ENCODE measurements at regions of chr6 and their contacts with region 1.

Region 1: DNA sequence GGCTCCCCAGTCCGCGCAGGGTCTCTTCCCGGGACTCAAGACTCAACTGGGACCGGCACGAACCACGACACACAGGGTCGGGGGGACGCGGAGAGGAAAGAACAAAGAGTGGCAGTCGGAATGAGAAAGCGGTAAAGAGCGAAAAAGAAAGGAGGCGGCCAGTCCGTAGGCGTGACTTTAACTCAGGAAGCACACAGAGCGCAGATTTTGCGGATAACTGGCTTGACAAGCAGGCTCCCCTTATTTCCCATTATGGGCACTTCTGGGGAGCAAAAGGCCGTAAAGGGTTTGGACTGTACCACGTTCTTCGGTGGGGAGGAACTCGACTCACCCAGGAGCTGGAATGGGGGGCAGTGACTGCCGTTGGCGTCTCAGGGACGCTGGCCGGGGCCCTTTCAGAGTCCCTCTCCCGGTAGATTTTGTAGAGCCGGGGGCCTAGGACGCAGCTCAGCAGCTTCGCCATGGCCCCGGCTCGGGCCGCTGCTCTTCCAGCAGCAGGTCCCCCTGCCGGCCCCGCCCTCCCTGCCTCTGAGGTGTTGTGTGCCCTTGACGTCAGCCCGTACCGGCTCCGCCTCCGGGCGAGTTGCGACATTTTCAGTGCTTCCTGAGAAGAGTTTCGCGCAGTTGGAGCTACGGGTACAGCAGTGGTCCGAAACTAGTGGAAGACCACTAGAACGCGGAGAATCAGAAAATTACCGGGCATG is at the start of gene ABHD16A:
- DNase-seq: peak; percentile 98
- H3K4me3 Mint-ChIP-seq: peak within 1 kb of the TSS; percentile 95
- H3K27ac Mint-ChIP-seq: peak within 1 kb of the TSS; percentile 89
- H3K4me1 Mint-ChIP-seq: peaks cover 5% of the 10 kb centered on the region
- H3K27me3 Mint-ChIP-seq: no peaks in the 10 kb centered on the region
- CTCF ChIP-seq: no peak
- total RNA-seq, gene ABHD16A: 32.1 and 42.7 TPM in 2 replicates

Region 2: DNA sequence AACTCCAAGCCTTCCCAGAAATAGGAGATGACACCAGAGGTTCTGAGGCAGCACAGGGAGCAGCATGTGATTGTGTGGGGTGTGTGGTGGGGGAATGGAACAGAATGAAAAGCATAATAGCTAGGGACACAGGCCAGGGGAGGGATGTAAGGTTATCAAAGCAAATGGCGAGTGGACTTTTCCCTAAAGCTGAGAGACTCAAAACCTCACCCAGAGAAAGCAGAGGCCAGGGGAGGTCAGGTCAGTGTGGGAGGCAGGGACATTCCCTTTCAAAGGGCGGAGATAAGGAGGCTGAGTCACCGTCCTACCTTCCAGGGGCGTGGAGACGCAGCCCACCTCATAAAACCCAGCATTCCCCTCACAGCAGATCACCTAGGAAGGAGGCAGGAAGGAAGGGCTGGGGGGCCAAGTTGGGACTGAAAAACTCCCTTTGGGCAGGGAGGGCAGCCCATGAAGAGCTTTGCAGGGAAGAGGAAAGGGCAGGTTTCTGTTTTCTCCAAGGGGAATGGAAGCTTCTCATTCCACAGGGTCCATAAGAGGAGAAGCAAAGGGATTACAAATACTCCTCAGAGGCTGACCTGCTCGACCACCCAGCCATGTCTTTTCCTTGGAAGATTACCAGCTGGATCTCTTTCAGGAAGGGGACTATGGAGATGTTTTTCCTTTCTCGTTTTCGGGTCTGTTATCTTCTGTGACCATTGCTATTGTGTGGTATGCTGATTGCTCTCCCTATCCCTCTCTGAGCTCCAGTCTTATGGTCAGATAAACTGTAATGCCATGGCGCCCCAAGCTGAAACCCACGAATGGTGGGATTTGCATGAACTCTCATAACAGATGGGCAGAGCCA is 12.5 kb before region 1 on chr6:
- CTCF ChIA-PET with region 1: interaction called, 3 read pairs
- POLR2A ChIA-PET with region 1: interaction called, 19 read pairs
- intact Hi-C with region 1: no loop called
- DNase-seq: no peak
- H3K4me3 Mint-ChIP-seq: no peak overlapping the region
- H3K27ac Mint-ChIP-seq: peak overlapping the region; percentile 33
- H3K4me1 Mint-ChIP-seq: peaks cover 6% of the 10 kb centered on the region
- H3K27me3 Mint-ChIP-seq: no peaks in the 10 kb centered on the region
- CTCF ChIP-seq: no peak

Region 3: GRCh38 chr6:31806465-31807272 is 103.7 kb after region 1 on chr6 and contains the start of gene LSM2:
- CTCF ChIA-PET with region 1: no interaction called
- POLR2A ChIA-PET with region 1: interaction called, 16 read pairs
- intact Hi-C with region 1: no loop called
- DNase-seq: peak; percentile 98
- H3K4me3 Mint-ChIP-seq: peak within 1 kb of the TSS; percentile 82
- H3K27ac Mint-ChIP-seq: peak within 1 kb of the TSS; percentile 84
- H3K4me1 Mint-ChIP-seq: peaks cover 6% of the 10 kb centered on the region
- H3K27me3 Mint-ChIP-seq: no peaks in the 10 kb centered on the region
- CTCF ChIP-seq: peak; percentile 27
- total RNA-seq, gene LSM2: 36.9 and 47.4 TPM in 2 replicates

Region 4: DNA sequence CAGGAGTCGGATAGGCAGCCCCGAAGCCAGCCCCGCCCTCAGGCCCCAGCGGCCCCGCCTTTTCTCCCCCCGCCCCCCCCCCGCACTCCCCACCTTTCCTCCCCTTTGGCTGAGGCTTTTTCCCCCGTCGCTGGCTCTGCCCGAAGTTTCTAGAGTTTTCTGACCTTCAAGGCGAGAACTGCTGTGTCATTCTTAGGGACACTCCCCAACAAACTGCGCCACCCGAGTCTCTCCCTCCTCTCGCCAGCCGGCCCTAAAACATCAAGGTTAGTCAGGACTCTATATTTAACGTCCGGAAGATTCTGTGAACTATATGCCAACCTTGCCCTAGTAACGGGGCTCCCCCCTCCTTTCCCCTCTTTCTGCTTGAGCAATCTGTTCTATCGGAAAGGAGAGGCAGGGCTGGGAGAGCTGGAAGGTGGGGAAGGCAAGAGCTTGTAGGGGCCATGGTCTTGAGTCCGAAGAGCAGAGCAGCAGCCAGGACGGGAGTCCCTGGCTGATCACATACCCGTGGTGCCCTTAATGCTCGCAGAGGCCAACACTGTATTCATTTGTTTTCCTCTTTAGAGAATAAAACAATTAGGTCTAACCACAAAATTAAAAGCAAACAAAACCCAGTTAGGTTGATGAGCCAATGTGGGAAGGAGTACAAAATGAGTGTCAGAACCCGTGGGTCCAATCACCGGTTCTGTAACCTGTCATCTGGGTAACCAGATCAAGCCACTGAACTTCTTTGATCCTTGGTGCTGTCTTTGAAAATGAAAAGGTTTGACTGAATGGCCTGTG is 119.3 kb after region 1 on chr6:
- CTCF ChIA-PET with region 1: interaction called, 3 read pairs
- POLR2A ChIA-PET with region 1: interaction called, 20 read pairs
- intact Hi-C with region 1: no loop called
- DNase-seq: peak; percentile 94
- H3K4me3 Mint-ChIP-seq: peak overlapping the region; percentile 91
- H3K27ac Mint-ChIP-seq: peak overlapping the region; percentile 99
- H3K4me1 Mint-ChIP-seq: peaks cover 29% of the 10 kb centered on the region
- H3K27me3 Mint-ChIP-seq: no peaks in the 10 kb centered on the region
- CTCF ChIP-seq: no peak

Measured in MCF 10A (cell line).